Activated T-helper 2 cell treated with anti-CD3 and anti-CD28 coated beads, Interferon-gamma antibody, Interleukin-2, Interleukin-4, amounts not matched to agents 10 μg/mL and 5 μg/mL and 100 μg/mL, durations not matched to agents 14 hours and 24 hours and 36 hours (primary cell): ENCODE measurements at regions of chr1 and their contacts with region 1.

Region 1: GRCh38 chr1:151156515-151156819 is at the start of gene TNFAIP8L2:
- DNase-seq: peak; percentile 71
- H3K4me3 Mint-ChIP-seq: peak within 1 kb of the TSS; percentile 99
- H3K27ac Mint-ChIP-seq: peak within 1 kb of the TSS; percentile 99
- H3K4me1 Mint-ChIP-seq: peaks cover 37% of the 10 kb centered on the region
- H3K27me3 Mint-ChIP-seq: no peaks in the 10 kb centered on the region
- total RNA-seq, gene TNFAIP8L2: 24.3 and 28.7 TPM in 2 replicates

Region 2: GRCh38 chr1:151070474-151071276 is 85.8 kb before region 1 on chr1 and contains the start of gene GABPB2:
- intact Hi-C with region 1: loop called (anchors 1 kb)
- DNase-seq: peak; percentile 82
- H3K4me3 Mint-ChIP-seq: peak within 1 kb of the TSS; percentile 100
- H3K27ac Mint-ChIP-seq: peak within 1 kb of the TSS; percentile 100
- H3K4me1 Mint-ChIP-seq: peaks cover 12% of the 10 kb centered on the region
- H3K27me3 Mint-ChIP-seq: no peaks in the 10 kb centered on the region
- total RNA-seq, gene GABPB2: 14.4 and 15.9 TPM in 2 replicates

Region 3: DNA sequence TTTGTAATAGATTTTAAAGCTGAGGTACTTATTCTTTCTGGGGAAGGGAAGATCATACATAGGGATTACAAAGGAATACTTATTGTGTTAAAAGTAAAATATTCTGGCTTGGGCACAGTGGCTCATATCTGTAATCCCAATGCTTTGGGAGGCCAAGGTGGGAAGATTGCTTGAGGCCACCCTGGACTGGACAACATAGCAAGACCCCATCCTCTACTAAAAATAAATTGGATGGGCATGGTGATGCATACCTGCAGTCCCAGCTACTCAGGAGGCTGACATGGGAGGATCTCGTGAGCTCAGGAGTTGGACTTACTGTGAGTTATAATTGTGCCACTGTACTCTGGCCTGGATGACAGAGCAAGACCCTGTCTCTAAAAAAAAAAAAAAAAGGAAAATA is 58.3 kb before region 1 on chr1:
- intact Hi-C with region 1: loop called (anchors 1 kb)
- DNase-seq: no peak
- H3K4me3 Mint-ChIP-seq: no peak overlapping the region
- H3K27ac Mint-ChIP-seq: no peak overlapping the region
- H3K4me1 Mint-ChIP-seq: no peaks in the 10 kb centered on the region
- H3K27me3 Mint-ChIP-seq: no peaks in the 10 kb centered on the region

Region 4: GRCh38 chr1:151198255-151199127 is 42.0 kb after region 1 on chr1 and contains the start of gene PIP5K1A:
- intact Hi-C with region 1: loop called (anchors 2 kb)
- DNase-seq: peak; percentile 97
- H3K4me3 Mint-ChIP-seq: peak within 1 kb of the TSS; percentile 99
- H3K27ac Mint-ChIP-seq: peak within 1 kb of the TSS; percentile 93
- H3K4me1 Mint-ChIP-seq: peaks cover 28% of the 10 kb centered on the region
- H3K27me3 Mint-ChIP-seq: peaks cover 3% of the 10 kb centered on the region
- total RNA-seq, gene PIP5K1A: 82.2 and 83.9 TPM in 2 replicates